Dorsolateral prefrontal cortex (tissue), 120 donors: ENCODE measurements at regions of chr1 and their contacts with region 1.

Region 1: DNA sequence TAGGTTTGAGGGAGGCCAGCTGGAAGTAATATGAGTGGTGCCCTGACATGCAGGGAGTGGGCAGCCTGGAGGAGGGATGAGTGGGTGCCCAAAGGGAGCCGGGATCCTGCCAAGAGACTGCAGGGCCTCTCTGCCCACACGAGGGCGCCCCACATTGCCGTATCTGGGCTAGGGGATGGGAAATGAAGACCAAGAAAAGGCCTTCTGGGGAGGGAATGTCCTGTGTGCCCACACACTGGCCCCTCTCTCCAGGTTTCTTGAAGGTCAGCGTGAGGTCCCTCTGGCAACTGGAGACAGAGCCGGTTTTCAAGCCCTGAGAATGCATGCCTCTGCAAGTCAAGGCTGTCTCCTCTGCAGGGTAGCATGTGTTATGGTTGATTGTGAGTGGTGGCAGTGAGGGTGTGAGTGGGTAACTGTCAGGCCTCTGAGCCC is 94.1 kb upstream of the PPM1J start:
- DNase-seq: peak; percentile 63 to 85 (median 78)
- H3K4me3 ChIP-seq: no peak overlapping the region
- H3K27ac ChIP-seq: no peak overlapping the region
- H3K27me3 ChIP-seq: no peaks in the 10 kb centered on the region
- CTCF ChIP-seq: peak; percentile 39 to 90 (median 81)

Region 2: GRCh38 chr1:112390775-112391602 is 418.3 kb before region 1 on chr1:
- intact Hi-C with region 1: loop called (anchors 5 to 10 kb)
- DNase-seq: peak; percentile 67 to 93 (median 88)
- H3K4me3 ChIP-seq: peak overlapping the region; percentile 24 to 70 (median 53)
- H3K27ac ChIP-seq: peak overlapping the region in 57 of 59 donors; percentile 7 to 93 (median 75)
- H3K27me3 ChIP-seq: no peaks in the 10 kb centered on the region
- CTCF ChIP-seq: peak; percentile 69 to 99 (median 94)

Region 3: DNA sequence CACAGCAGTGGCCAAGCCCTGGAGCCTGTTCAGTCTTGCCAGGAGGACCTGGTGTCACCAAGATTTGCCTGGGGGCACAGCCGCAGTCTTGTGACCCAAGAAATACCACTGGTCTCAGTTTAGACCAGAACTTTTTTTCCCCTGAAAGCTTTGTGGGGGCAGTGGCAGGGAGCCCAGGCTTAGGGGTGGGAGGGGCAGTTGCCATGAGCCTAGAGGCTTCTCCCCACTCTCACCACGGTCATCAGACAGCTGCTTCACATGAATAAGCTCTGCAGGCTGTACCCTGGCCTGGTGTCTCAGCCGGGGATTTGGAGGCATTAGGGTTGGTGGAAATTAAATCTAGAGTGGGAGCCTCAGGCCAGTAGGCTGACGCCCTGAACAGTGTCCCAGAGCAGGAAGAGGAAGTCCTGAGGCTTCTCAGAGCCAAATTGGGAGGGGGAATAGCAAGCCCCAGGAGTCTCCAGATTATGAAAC is 73.0 kb after region 1 on chr1:
- intact Hi-C with region 1: loop called in 1 of 2 experiments (anchors 5 kb)
- DNase-seq: peak in 3 of 10 donors; percentile 19 to 56 (median 34)
- H3K4me3 ChIP-seq: no peak overlapping the region
- H3K27ac ChIP-seq: peak overlapping the region in 54 of 59 donors; percentile 15 to 89 (median 69)
- H3K27me3 ChIP-seq: no peaks in the 10 kb centered on the region
- CTCF ChIP-seq: no peak

Region 4: DNA sequence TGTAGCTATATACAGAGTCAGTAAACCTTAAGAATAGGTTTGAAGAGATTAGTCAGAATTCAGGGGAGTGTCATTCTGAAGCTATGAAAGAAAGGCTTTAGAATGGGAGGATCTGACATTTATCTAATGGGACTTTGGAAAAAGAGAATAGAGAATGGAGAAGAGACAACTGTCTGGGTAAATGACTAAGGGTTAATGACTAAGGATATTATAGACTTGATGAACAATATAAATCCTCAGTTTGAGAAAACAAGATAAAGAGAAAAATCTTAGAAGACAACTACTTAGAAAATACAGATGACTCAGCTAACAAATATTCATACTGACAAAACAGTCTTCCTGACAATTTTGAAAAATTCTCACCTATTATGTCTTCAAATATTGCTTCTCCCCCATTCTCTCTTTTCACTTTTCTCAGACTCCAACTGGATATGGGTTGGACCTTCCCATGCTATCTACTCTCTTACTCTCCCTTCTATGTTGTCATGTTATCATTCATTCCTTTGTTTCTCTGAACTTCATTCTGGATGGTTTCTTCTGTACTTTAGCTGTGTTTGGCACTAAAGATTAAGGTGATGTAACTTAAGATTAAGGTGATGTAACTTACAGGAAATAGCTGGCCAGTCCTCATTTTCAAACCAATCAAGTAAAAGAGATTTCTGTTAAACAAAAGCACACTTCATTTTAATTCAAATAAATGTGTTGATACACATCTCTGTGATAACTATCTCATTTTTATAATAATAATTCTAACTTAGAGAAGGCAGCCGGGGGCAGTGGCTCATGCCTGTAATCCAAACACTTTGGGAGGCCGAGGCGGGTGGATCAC is 126.4 kb after region 1 on chr1:
- intact Hi-C with region 1: no loop called
- DNase-seq: no peak
- H3K4me3 ChIP-seq: no peak overlapping the region
- H3K27ac ChIP-seq: peak overlapping the region in 2 of 59 donors; percentile 3 to 61
- H3K27me3 ChIP-seq: no peaks in the 10 kb centered on the region
- CTCF ChIP-seq: no peak

Region 5: DNA sequence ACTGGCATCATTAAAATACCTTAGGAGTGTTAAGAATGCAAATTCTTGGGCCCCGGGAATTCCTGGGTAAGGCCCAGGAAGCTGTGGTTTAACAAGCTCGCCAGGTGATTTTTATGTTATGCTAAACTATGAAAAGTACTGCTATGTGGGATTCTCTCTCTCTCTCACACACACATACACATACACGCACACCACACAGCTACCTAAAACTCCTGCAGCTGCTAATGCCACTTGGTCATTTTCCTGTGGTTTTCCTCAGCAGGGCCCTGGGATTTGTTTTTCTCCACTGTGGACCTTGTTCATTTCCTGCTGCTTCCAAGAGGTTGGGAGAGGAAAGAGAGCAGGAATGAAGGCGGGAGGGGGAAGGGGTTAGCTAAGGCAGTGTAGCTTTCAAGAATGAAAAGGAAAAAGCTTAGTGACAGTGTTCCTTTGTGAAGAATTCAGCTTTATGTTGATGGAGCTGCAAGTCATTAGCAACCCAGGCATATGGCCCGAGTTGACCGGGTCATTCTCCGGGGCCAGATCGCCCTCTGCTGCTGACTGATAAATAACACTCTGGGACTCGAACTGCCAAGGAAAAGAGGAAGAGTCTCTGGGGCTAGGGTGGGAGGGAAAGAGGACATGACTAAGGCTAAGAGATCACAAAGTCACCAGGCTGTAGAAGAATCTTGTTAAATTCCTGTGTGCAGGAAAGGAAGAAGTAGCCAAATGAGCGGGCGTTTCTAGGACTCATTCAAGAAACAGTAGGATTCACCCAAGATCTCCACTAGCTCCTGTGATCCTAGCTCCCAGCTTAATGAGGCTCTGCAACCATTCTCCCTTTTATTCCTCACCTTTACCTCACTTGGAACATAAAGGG is 233.2 kb after region 1 on chr1:
- intact Hi-C with region 1: loop called in 1 of 2 experiments (anchors 1 kb)
- DNase-seq: peak; percentile 63 to 85 (median 76)
- H3K4me3 ChIP-seq: peak overlapping the region in 21 of 59 donors; percentile 0 to 42 (median 15)
- H3K27ac ChIP-seq: peak overlapping the region; percentile 21 to 96 (median 85)
- H3K27me3 ChIP-seq: no peaks in the 10 kb centered on the region
- CTCF ChIP-seq: peak in 55 of 56 donors; percentile 50 to 82 (median 68)